B cell (primary cell): ENCODE measurements at regions of chr17 and their contacts with region 1.

Region 1: DNA sequence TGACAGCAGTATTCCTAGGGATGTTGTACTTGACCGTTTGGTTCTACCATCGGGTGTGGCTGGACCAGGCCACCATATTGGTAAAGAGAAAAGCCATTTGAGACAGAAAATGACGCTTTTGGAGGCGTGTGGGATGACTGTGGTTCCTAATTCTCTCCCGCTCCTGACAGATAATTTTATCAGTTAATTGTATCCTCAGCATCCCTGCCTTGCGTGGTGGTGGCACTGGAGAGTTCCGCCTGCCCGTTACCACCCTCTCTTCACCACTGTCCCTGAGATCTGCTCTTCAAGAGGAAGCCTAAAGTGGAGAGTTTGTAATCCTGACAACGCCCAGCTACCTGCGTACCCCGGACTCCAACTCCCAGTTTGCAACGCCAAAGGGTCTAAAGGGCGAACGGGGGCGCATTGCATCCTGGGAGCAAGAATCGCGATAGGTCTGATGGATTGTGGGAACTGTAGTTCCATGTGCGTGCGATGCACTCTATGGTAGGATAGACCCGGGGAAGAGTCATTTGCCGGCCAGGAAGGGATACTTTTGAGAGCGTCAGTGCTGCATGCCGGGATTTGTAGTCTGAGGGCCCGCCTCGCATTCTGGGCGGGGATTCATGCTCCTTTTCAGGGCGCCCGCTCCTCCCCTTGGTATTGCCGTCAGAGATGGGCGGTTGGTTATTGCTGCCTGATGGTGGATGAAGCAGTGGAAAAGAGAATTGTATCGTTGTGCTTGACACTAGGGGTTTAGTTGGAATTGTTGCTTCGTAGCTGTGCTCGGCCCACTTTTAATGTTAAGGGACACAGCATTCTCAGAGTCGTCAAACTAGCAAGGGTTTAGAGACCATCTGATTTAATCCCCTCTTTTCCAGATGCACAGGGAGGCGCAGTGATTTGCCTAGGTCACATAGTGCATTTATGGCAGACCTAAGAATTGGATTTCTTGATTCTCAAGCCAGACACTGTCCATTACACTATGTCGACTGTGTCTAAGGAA is 965 bp upstream of the PHF12 start:
- DNase-seq: peak; percentile 99
- ATAC-seq: peak; percentile 68
- H3K4me3 ChIP-seq: peak overlapping the region; percentile 68 to 99 (median 86)
- H3K4me3 Mint-ChIP-seq: no peak overlapping the region
- H3K27ac ChIP-seq: peak overlapping the region; percentile 97 to 98
- H3K27ac Mint-ChIP-seq: no peak overlapping the region
- H3K4me1 ChIP-seq: peaks cover 24 to 28% of the 10 kb centered on the region in 2 donors
- H3K4me1 Mint-ChIP-seq: peaks cover 17% of the 10 kb centered on the region
- H3K27me3 ChIP-seq: no peaks in the 10 kb centered on the region
- H3K27me3 Mint-ChIP-seq: no peaks in the 10 kb centered on the region
- CTCF ChIP-seq: no peak

Region 2: DNA sequence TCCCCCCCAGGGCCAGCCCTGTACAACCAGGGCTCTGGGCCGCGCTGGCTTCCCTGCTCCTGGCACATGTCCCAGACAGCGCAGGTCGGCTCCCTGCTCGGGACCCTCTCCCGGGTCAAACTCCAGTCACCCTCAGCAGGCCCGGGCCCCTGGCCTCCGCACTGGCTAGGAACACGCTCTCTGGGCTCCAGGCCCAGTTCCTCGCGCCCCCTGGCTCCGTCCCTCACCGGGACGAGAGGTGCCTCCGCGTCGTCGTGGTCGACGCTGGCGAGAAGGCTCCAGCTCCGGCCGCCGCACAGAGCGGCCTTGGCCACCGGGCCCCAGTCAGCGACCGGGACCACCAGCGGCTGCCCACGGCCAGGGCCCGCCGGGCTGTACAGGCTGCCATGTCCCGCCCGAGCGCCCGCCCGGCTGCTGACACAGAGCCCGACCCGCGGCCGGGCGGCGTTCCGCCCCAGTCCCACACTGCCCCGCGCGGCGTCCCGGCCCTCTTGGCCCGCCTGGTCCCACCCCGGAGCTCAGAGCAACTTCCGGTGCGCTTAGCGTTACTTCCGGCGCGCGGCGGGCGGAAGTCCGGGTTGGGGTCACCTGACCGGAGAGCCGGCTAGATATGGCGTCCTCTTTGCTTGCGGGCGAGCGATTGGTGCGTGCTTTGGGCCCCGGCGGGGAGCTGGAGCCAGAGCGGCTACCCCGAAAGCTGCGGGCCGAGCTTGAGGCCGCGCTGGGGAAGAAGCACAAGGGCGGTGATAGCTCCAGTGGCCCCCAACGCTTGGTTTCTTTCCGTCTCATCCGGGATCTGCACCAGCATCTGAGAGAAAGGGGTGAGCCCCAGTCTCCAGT is 595.0 kb before region 1 on chr17 and contains the start of gene POLDIP2:
- CTCF ChIA-PET with region 1: no interaction called
- POLR2A ChIA-PET with region 1: no interaction called
- intact Hi-C with region 1: loop called (anchors 5 kb)
- DNase-seq: peak; percentile 96
- ATAC-seq: peak; percentile 98
- H3K4me3 ChIP-seq: peak within 1 kb of the TSS; percentile 74 to 91 (median 81)
- H3K4me3 Mint-ChIP-seq: peak within 1 kb of the TSS; percentile 97
- H3K27ac ChIP-seq: peak within 1 kb of the TSS; percentile 67 to 83
- H3K27ac Mint-ChIP-seq: peak within 1 kb of the TSS; percentile 97
- H3K4me1 ChIP-seq: peaks cover 17 to 22% of the 10 kb centered on the region in 2 donors
- H3K4me1 Mint-ChIP-seq: peaks cover 22% of the 10 kb centered on the region
- H3K27me3 ChIP-seq: no peaks in the 10 kb centered on the region
- H3K27me3 Mint-ChIP-seq: no peaks in the 10 kb centered on the region
- CTCF ChIP-seq: peak; percentile 22
- total RNA-seq, gene POLDIP2: 29.7 and 35.7 TPM in 2 replicates

Region 3: DNA sequence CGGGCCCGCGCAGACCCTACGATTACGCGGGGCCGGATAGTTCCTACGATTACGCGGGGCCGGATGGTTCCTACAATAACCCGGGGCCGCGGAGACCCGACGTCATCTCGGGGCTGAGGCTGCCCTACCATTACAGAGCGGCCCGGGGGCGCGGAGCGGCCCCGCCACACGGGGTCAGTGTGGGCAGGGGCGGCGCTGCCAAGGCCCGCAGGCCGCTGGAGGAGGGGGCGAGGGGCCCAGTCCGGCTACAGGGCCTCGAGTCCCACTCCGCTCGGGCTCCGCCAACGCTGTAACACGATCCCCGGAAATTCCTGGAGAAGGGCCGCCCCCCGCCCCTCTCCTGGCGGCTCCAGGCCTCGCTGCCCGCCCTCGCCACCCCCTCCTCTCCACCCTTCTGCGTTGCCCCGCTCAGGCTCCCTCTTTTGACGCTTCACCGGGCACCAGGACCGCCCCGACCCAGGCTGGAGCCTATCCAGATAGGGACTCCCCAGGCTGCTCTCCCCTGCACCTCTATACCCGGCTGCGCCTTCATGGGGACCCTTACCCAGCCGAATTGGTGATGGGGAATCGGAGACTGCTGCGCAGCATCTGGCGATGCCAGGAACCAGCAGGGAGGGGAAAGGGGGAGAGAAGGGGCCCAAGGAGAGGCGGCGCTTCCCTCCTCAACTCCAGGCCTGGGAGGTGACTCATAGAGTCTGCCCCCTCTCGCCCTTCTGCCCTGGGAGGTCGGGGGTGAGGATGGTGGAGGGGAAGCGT is 234.5 kb before region 1 on chr17 and contains the start of gene RAB34:
- CTCF ChIA-PET with region 1: interaction called, 8 read pairs
- POLR2A ChIA-PET with region 1: interaction called, 20 read pairs
- intact Hi-C with region 1: loop called (anchors 1 kb)
- DNase-seq: peak; percentile 70
- ATAC-seq: peak; percentile 18
- H3K4me3 ChIP-seq: peak within 1 kb of the TSS in 4 of 5 experiments; percentile 46 to 61 (median 52)
- H3K4me3 Mint-ChIP-seq: peak within 1 kb of the TSS; percentile 86
- H3K27ac ChIP-seq: peak within 1 kb of the TSS; percentile 56 to 71
- H3K27ac Mint-ChIP-seq: peak within 1 kb of the TSS; percentile 89
- H3K4me1 ChIP-seq: peaks cover 44 to 57% of the 10 kb centered on the region in 2 donors
- H3K4me1 Mint-ChIP-seq: peaks cover 45% of the 10 kb centered on the region
- H3K27me3 ChIP-seq: peaks cover 0 to 8% (median 2%) of the 10 kb centered on the region in 4 experiments
- H3K27me3 Mint-ChIP-seq: no peaks in the 10 kb centered on the region
- CTCF ChIP-seq: no peak
- total RNA-seq, gene RAB34: 18.0 and 20.5 TPM in 2 replicates

Region 4: GRCh38 chr17:28842282-28843012 is 109.8 kb before region 1 on chr17 and contains the start of gene FAM222B:
- CTCF ChIA-PET with region 1: no interaction called
- POLR2A ChIA-PET with region 1: interaction called, 3 read pairs
- intact Hi-C with region 1: loop called (anchors 5 kb)
- DNase-seq: peak; percentile 91
- ATAC-seq: peak; percentile 98
- H3K4me3 ChIP-seq: peak within 1 kb of the TSS; percentile 67 to 92 (median 87)
- H3K4me3 Mint-ChIP-seq: peak within 1 kb of the TSS; percentile 97
- H3K27ac ChIP-seq: peak within 1 kb of the TSS; percentile 70 to 87
- H3K27ac Mint-ChIP-seq: peak within 1 kb of the TSS; percentile 96
- H3K4me1 ChIP-seq: peaks cover 10 to 15% of the 10 kb centered on the region in 2 donors
- H3K4me1 Mint-ChIP-seq: peaks cover 23% of the 10 kb centered on the region
- H3K27me3 ChIP-seq: no peaks in the 10 kb centered on the region
- H3K27me3 Mint-ChIP-seq: no peaks in the 10 kb centered on the region
- CTCF ChIP-seq: no peak
- total RNA-seq, gene FAM222B: 21.9 and 23.1 TPM in 2 replicates

Region 5: GRCh38 chr17:28967221-28968140 is 15.2 kb after region 1 on chr17:
- CTCF ChIA-PET with region 1: interaction called, 37 read pairs
- POLR2A ChIA-PET with region 1: no interaction called
- intact Hi-C with region 1: no loop called
- DNase-seq: peak; percentile 50
- ATAC-seq: peak; percentile 21
- H3K4me3 ChIP-seq: no peak overlapping the region
- H3K4me3 Mint-ChIP-seq: no peak overlapping the region
- H3K27ac ChIP-seq: peak overlapping the region in 1 of 2 donors; percentile 40
- H3K27ac Mint-ChIP-seq: peak overlapping the region; percentile 66
- H3K4me1 ChIP-seq: peaks cover 4 to 17% of the 10 kb centered on the region in 2 donors
- H3K4me1 Mint-ChIP-seq: peaks cover 9% of the 10 kb centered on the region
- H3K27me3 ChIP-seq: peaks cover 0 to 15% (median 2%) of the 10 kb centered on the region in 4 experiments
- H3K27me3 Mint-ChIP-seq: peaks cover 13% of the 10 kb centered on the region
- CTCF ChIP-seq: no peak

Region 6: GRCh38 chr17:29568331-29569244 is 616.3 kb after region 1 on chr17 and contains the start of gene TP53I13:
- CTCF ChIA-PET with region 1: no interaction called
- POLR2A ChIA-PET with region 1: interaction called, 7 read pairs
- intact Hi-C with region 1: loop called (anchors 10 kb)
- DNase-seq: peak; percentile 92
- ATAC-seq: peak; percentile 60
- H3K4me3 ChIP-seq: peak within 1 kb of the TSS; percentile 71 to 99 (median 80)
- H3K4me3 Mint-ChIP-seq: peak within 1 kb of the TSS; percentile 99
- H3K27ac ChIP-seq: peak within 1 kb of the TSS; percentile 71 to 76
- H3K27ac Mint-ChIP-seq: peak within 1 kb of the TSS; percentile 97
- H3K4me1 ChIP-seq: peaks cover 27 to 40% of the 10 kb centered on the region in 2 donors
- H3K4me1 Mint-ChIP-seq: peaks cover 39% of the 10 kb centered on the region
- H3K27me3 ChIP-seq: no peaks in the 10 kb centered on the region
- H3K27me3 Mint-ChIP-seq: no peaks in the 10 kb centered on the region
- CTCF ChIP-seq: no peak
- total RNA-seq, gene TP53I13: 220 and 224 TPM in 2 replicates